ENCODE measurements at regions of chr16 and their contacts with region 1.

Region 1: GRCh38 chr16:73713778-73714495 is 582.7 kb upstream of the PSMD7 start:
- DNase-seq: no peak
- H3K27ac ChIP-seq: no peak overlapping the region
- CTCF ChIP-seq: 0 out of 2 replicates have a peak, but pooled peaks have one; percentile 28

Region 2: DNA sequence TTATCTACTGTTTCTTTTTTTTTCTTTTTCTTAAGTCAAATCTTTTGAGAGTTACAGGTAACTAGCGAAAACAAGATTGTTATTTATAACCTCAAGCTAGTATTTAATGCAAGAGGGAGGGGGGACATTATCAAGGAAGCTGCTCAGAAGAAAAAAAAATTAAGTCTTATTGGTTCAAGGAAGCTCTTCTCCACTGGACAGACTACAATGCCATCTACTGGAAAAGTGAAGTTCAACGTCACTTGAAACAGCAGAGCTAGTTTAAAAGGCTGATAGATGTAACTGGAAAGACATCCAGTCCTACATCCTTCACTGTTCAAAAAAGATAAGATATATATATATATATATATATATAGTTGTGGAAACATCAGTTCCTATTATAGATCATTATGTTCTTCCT is 164.7 kb after region 1 on chr16:
- CTCF ChIA-PET with region 1: interaction called, 13 read pairs
- POLR2A ChIA-PET with region 1: no interaction called
- DNase-seq: peak; percentile 48
- H3K27ac ChIP-seq: no peak overlapping the region
- CTCF ChIP-seq: peak; percentile 44

Measured in RWPE1 (cell line).